Activated CD4-positive, alpha-beta memory T cell treated with anti-CD3 and anti-CD28 coated beads, Interleukin-2, amount 10 ng/mL, durations not matched to agents 7 days and 5 days (primary cell): ENCODE measurements at regions of chr16 and their contacts with region 1.

Region 1: DNA sequence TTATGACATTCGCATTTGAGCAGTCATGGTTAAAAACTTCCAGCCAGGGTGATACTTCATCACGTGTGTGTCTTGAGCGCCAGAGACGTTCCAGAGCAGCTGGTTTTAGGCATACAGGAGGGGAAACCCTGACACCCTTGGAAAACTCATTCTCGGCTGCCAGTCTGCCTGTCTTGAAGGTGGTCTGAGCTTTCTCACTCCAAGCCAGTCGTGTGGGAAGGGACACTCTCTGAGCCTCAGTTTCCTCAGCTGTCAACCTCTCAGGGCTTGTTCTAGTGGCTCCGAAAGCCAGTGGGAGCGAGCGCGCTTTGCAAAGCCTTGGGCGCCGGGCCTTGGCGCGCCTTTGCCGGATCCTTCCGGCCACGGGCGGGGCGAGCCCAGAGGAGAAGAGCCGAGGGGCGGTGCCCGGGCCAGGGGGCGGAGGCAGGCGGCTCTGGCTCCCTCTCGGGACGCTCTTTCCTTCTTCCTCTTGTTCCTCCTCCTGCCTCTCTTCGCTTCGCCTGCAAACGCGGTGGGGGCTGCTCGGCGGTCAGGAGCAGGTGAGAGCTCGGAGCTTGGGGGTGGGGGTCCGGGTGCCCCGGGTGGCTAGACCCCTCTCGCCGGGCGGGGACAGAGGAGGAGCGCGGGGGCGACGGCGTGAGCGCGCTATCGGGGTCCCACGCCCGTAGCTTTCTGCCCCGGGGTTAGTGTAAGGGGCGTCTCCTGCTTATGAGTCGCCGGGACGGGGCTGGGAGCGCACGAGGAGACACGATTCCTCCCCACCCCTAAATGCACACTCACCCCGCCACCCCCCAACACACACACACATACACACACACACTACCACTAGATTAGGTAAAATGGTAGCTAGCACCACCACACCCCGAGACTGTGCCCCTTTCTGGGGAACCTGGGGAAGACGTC is at the start of gene LDAF1:
- DNase-seq: peak; percentile 86
- H3K4me3 Mint-ChIP-seq: peak within 1 kb of the TSS; percentile 90
- H3K27ac Mint-ChIP-seq: peak within 1 kb of the TSS; percentile 64
- H3K4me1 Mint-ChIP-seq: peaks cover 27% of the 10 kb centered on the region
- H3K27me3 Mint-ChIP-seq: no peaks in the 10 kb centered on the region
- total RNA-seq, gene LDAF1: 15.8 to 19.2 TPM

Region 2: GRCh38 chr16:21075252-21075651 is 83.2 kb before region 1 on chr16:
- CTCF ChIA-PET with region 1: no interaction called
- POLR2A ChIA-PET with region 1: no interaction called
- DNase-seq: no peak
- H3K4me3 Mint-ChIP-seq: no peak overlapping the region
- H3K27ac Mint-ChIP-seq: no peak overlapping the region
- H3K4me1 Mint-ChIP-seq: no peaks in the 10 kb centered on the region
- H3K27me3 Mint-ChIP-seq: no peaks in the 10 kb centered on the region

Region 3: DNA sequence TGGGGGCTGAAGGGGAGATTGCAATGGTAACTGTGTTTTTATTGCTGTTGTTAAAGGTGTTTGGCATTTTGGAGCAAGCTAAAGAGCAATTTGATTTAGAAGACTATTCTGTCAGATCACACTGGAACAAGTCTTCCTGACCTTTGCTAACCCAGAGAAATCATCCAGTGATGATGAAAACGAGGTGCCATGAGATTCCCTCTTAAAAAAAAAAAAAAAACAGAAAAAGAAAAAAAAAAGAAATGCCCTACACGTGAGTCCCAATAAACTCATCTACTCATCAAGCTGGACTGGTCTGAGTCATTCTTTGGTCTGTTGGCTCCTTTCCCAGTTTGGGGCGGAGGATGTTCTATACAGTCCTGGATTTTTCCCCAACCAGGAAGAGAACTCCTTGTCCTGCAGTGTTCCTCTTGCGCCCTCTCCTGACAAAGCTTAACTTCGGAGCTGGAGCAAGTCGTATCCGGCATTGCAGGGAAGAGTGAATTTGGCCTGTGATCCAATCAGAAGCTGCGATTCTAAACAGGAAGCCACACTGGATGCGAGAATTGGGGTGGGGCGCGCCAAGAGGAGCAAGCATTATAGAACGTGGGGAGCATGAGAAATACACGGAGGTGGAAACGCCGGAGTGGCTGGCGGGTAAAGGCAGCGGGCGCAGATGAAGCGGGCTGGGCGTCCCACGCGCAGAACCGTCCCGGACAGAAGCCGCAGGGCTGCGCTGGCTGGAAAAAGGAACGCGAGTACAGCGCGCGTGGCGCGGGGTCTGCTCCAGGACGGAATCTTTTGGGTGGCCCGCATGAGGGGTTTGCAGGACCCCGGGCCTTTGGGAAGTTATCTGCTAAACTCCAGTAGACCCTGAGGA is 142.1 kb after region 1 on chr16:
- CTCF ChIA-PET with region 1: interaction called, 13 read pairs
- POLR2A ChIA-PET with region 1: interaction called, 4 read pairs
- DNase-seq: peak; percentile 59
- H3K4me3 Mint-ChIP-seq: peak overlapping the region; percentile 91
- H3K27ac Mint-ChIP-seq: no peak overlapping the region
- H3K4me1 Mint-ChIP-seq: peaks cover 21% of the 10 kb centered on the region
- H3K27me3 Mint-ChIP-seq: peaks cover 38% of the 10 kb centered on the region